Tibial artery (tissue), 4 donors: ENCODE measurements at regions of chr11 and their contacts with region 1.

Region 1: GRCh38 chr11:133887692-133888332 is 42.5 kb upstream of the SPATA19 start:
- DNase-seq: no peak
- H3K4me3 ChIP-seq: no peak overlapping the region
- H3K27ac ChIP-seq: no peak overlapping the region
- H3K4me1 ChIP-seq: no peaks in the 10 kb centered on the region
- H3K27me3 ChIP-seq: no peaks in the 10 kb centered on the region
- CTCF ChIP-seq: no peak

Region 2: DNA sequence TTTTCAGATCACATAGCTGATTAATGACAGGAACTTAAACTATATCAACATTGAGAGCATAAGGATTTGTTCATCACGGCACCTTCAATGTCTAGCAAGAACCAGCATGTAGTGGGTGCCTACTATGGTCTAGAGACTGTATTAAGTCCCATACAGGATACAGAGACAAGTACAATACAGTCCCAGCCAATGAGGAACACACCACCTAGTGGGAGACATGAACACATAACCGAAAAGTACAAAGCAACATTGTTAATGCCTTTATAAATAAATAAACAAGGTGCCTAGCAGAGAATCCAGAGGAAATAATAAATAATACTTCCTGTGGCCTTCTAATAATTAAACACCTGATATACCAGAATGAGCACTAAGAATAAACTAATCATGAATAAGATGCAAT is 267.8 kb before region 1 on chr11:
- intact Hi-C with region 1: loop called (anchors 5 kb)
- DNase-seq: no peak
- H3K4me3 ChIP-seq: no peak overlapping the region
- H3K27ac ChIP-seq: no peak overlapping the region
- H3K4me1 ChIP-seq: no peaks in the 10 kb centered on the region
- H3K27me3 ChIP-seq: no peaks in the 10 kb centered on the region
- CTCF ChIP-seq: no peak

Region 3: GRCh38 chr11:133911171-133911570 is 23.4 kb after region 1 on chr11:
- intact Hi-C with region 1: no loop called
- DNase-seq: no peak
- H3K4me3 ChIP-seq: no peak overlapping the region
- H3K27ac ChIP-seq: no peak overlapping the region
- H3K4me1 ChIP-seq: no peaks in the 10 kb centered on the region
- H3K27me3 ChIP-seq: no peaks in the 10 kb centered on the region
- CTCF ChIP-seq: no peak

Region 4: DNA sequence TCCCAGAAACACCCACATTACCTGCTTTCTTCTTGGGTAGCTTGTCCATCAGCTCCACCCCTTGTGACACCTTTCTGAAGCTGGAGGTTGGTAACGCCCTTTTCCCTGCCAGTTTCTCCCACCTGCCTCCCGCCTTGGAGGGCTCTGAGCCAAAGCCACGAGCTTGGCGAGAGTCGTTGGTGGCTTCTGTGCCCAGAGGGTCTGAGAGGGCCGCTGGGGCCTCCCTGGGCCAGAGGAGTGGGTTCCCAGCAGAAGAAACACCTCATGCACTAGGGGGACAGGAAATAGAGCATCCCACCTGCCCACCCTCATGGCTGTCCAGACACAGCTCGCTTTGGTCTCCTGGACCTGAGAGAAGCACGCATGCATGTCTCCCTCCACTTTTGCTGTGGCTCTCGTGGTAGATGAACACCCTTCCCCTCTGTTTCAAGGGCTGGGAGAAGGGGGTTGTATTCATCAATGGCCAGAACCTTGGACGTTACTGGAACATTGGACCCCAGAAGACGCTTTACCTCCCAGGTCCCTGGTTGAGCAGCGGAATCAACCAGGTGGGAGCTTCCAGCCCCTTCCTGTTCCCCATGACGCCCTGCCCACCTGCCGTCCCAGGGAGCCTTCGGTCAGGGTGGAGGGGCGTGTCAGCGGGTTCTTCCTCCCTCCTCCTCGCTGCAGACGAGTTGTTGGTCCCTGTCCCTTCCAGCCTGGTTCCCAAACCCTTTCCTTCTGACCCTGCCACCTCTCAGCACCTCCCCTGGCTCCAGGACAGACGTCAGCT is 486.5 kb after region 1 on chr11:
- intact Hi-C with region 1: no loop called
- DNase-seq: no peak
- H3K4me3 ChIP-seq: no peak overlapping the region
- H3K27ac ChIP-seq: no peak overlapping the region
- H3K4me1 ChIP-seq: no peaks in the 10 kb centered on the region
- H3K27me3 ChIP-seq: no peaks in the 10 kb centered on the region
- CTCF ChIP-seq: no peak